ENCODE measurements at regions of chr16 and their contacts with region 1.

Region 1: DNA sequence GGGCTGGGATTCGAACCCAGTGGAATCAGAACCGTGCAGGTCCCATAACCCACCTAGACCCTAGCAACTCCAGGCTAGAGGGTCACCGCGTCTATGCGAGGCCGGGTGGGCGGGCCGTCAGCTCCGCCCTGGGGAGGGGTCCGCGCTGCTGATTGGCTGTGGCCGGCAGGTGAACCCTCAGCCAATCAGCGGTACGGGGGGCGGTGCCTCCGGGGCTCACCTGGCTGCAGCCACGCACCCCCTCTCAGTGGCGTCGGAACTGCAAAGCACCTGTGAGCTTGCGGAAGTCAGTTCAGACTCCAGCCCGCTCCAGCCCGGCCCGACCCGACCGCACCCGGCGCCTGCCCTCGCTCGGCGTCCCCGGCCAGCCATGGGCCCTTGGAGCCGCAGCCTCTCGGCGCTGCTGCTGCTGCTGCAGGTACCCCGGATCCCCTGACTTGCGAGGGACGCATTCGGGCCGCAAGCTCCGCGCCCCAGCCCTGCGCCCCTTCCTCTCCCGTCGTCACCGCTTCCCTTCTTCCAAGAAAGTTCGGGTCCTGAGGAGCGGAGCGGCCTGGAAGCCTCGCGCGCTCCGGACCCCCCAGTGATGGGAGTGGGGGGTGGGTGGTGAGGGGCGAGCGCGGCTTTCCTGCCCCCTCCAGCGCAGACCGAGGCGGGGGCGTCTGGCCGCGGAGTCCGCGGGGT is at the start of gene CDH1:
- DNase-seq: peak; percentile 99
- H3K4me3 Mint-ChIP-seq: peak within 1 kb of the TSS; percentile 89
- H3K27ac Mint-ChIP-seq: peak within 1 kb of the TSS; percentile 85
- H3K4me1 Mint-ChIP-seq: peaks cover 34% of the 10 kb centered on the region
- H3K27me3 Mint-ChIP-seq: no peaks in the 10 kb centered on the region
- CTCF ChIP-seq: no peak
- total RNA-seq, gene CDH1: 328 and 421 TPM in 2 replicates

Region 2: DNA sequence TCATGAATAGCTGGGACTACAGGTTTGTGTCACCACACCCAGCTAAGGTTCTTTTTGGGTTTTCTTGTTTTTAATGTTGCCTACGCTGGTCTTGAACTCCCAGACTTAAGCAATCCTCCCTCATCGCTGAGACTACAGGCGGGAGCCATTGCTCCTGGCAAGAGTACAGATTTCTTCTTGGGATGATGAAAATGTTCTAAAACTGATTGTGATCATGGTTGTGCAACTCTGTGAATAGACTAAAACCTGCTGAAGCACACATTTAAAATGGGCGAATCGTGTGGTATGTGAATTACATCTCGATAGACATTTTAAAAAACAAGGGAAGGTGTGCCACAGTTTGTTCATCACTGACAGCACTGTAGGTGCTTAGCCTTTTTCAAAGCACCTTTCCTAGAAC is 141.0 kb before region 1 on chr16:
- CTCF ChIA-PET with region 1: no interaction called
- intact Hi-C with region 1: no loop called
- DNase-seq: no peak
- H3K4me3 Mint-ChIP-seq: no peak overlapping the region
- H3K27ac Mint-ChIP-seq: no peak overlapping the region
- H3K4me1 Mint-ChIP-seq: no peaks in the 10 kb centered on the region
- H3K27me3 Mint-ChIP-seq: no peaks in the 10 kb centered on the region
- CTCF ChIP-seq: no peak

Region 3: GRCh38 chr16:68756250-68756915 is 19.2 kb after region 1 on chr16:
- CTCF ChIA-PET with region 1: interaction called, 18 read pairs
- intact Hi-C with region 1: loop called (anchors 2 kb)
- DNase-seq: peak; percentile 95
- H3K4me3 Mint-ChIP-seq: peak overlapping the region; percentile 54
- H3K27ac Mint-ChIP-seq: peak overlapping the region; percentile 94
- H3K4me1 Mint-ChIP-seq: peaks cover 81% of the 10 kb centered on the region
- H3K27me3 Mint-ChIP-seq: no peaks in the 10 kb centered on the region
- CTCF ChIP-seq: no peak

Measured in Calu3 (cell line).